ENCODE measurements at regions of chr3 and their contacts with region 1.

Region 1: DNA sequence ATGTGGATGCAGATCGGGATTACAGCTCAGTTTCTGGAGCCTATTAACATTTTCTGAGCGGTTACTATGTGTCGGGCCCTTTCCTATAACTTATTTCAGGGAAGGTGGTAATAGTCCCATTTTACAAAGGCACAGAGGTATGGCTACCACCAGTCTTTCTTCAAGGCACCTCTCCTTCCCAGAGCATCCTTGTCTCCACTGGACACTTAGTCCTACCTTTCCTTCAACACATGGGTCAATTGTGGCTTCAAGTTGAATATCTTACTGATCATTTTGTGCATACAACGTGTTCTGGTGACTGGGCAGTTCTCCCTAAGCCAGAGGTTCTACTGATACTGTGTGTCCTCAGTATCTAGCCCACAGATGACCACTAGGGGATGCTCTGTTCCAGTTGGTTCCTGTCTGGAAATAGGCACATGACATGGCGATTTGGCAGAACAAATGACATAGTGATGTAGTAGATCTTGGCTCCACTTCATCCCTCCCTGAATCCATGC is 60.7 kb upstream of the CMTM8 start:
- DNase-seq: peak; percentile 91
- H3K4me3 ChIP-seq: no peak overlapping the region
- H3K27ac ChIP-seq: no peak overlapping the region
- H3K4me1 ChIP-seq: peaks cover 6% of the 10 kb centered on the region
- H3K27me3 ChIP-seq: no peaks in the 10 kb centered on the region
- CTCF ChIP-seq: peak; percentile 92 to 95
- POLR2A ChIP-seq: no peak

Region 2: DNA sequence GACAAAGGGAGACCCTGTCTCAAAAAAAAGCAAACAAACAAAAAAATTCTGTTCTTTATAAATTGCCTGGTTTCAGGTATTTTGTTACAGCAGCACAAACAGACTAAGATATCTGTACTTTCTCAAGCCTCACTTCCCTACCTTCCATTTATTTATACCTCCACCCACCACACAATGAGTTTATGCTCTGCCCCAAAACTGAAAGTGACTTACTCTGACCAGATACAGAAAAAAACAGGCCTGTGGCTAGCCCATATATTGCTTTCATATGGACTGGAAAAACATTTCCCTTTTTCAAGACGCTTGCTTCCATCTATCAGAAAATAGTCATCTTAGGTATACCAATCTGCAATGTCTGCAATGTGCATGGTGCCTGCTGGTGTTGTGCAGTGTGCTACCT is 80.0 kb before region 1 on chr3:
- CTCF ChIA-PET with region 1: no interaction called
- POLR2A ChIA-PET with region 1: no interaction called
- dilution Hi-C with region 1: no loop called
- intact Hi-C with region 1: no loop called
- DNase-seq: no peak
- H3K4me3 ChIP-seq: no peak overlapping the region
- H3K27ac ChIP-seq: no peak overlapping the region
- H3K4me1 ChIP-seq: no peaks in the 10 kb centered on the region
- H3K27me3 ChIP-seq: peaks cover 0 to 2% of the 10 kb centered on the region in 2 experiments
- CTCF ChIP-seq: no peak
- POLR2A ChIP-seq: no peak

Region 3: DNA sequence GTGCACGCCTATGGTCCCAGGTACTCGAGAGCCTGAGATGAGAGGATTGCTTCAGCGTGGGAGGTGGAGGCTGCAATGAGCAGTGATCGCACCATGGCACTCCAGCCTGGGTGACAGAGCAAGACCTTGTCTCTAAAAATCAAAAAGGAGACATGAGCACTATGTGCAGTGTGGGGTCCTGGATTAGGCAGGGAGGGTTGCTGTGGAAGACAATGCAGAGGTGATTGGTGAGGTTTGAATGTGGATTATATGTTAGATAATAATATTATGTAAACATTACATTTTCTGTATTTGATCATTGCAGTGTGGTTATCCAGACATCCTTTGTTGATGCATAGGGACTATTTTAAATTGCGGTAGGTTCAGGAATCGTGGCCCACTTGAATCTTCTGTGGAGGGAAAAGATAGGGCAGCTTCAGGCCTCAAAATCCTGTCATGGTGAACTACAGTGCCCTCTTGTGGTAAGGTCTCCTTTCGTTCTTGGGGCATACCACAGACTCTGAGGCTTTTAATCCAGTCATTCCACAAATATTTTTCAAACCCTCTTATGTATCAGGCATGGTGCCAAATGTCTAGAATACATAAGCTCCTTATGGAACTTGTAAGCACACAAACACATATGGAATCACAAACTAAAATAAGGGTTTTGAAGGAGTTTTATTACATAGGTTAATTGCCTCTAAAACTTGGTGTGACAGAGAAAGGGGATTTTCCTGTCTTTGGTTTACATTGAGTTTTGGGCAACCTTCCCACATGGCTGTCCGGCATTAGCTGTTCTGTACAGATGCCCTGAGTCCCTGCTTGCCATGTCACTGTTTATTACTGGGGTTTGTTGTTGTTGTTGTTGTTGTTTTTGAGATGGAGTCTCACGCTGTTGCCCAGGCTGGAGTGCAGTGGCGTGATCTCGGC is 33.6 kb before region 1 on chr3:
- CTCF ChIA-PET with region 1: no interaction called
- POLR2A ChIA-PET with region 1: no interaction called
- dilution Hi-C with region 1: no loop called
- intact Hi-C with region 1: no loop called
- DNase-seq: peak; percentile 90
- H3K4me3 ChIP-seq: no peak overlapping the region
- H3K27ac ChIP-seq: no peak overlapping the region
- H3K4me1 ChIP-seq: peaks cover 23% of the 10 kb centered on the region
- H3K27me3 ChIP-seq: no peaks in the 10 kb centered on the region
- CTCF ChIP-seq: peak; percentile 71 to 76
- POLR2A ChIP-seq: no peak

Region 4: GRCh38 chr3:32238453-32239306 is 60.9 kb after region 1 on chr3 and contains the start of gene CMTM8:
- CTCF ChIA-PET with region 1: interaction called, 27 read pairs
- POLR2A ChIA-PET with region 1: no interaction called
- dilution Hi-C with region 1: no loop called
- intact Hi-C with region 1: loop called (anchors 1 kb)
- DNase-seq: peak; percentile 51
- H3K4me3 ChIP-seq: peak within 1 kb of the TSS; percentile 67 to 78 (median 70)
- H3K27ac ChIP-seq: no peak within 1 kb of the TSS
- H3K4me1 ChIP-seq: peaks cover 15% of the 10 kb centered on the region
- H3K27me3 ChIP-seq: no peaks in the 10 kb centered on the region
- CTCF ChIP-seq: no peak
- POLR2A ChIP-seq: no peak
- total RNA-seq, gene CMTM8: 7.3 and 8.1 TPM in 2 replicates

Region 5: GRCh38 chr3:32296256-32297204 is 118.8 kb after region 1 on chr3:
- CTCF ChIA-PET with region 1: interaction called, 15 read pairs
- POLR2A ChIA-PET with region 1: no interaction called
- dilution Hi-C with region 1: no loop called
- intact Hi-C with region 1: loop called (anchors 1 kb)
- DNase-seq: peak; percentile 68
- H3K4me3 ChIP-seq: no peak overlapping the region
- H3K27ac ChIP-seq: no peak overlapping the region
- H3K4me1 ChIP-seq: peaks cover 3% of the 10 kb centered on the region
- H3K27me3 ChIP-seq: no peaks in the 10 kb centered on the region
- CTCF ChIP-seq: peak; percentile 80 to 86
- POLR2A ChIP-seq: no peak

Region 6: DNA sequence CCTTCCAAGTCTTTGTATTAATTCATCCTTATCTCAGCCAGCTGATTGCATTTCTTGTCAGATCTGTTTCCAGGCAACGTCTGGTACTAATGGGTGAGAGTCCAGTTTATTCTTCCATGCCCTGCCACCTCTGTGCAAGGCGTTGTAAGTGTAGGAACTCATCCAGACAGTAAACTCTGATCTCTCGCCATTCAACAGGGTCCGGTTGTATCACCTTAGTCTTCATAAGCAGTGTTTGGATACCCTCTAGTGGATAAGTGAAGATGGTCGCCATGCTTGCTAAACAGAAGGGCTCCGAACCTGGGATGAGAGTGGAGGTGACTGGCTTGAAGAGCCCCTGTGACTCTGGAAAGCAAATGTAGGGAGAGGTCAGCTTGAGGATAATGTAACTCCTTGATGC is 162.3 kb after region 1 on chr3:
- CTCF ChIA-PET with region 1: interaction called, 9 read pairs
- POLR2A ChIA-PET with region 1: no interaction called
- dilution Hi-C with region 1: no loop called
- intact Hi-C with region 1: loop called (anchors 1 kb)
- DNase-seq: peak; percentile 36
- H3K4me3 ChIP-seq: no peak overlapping the region
- H3K27ac ChIP-seq: no peak overlapping the region
- H3K4me1 ChIP-seq: peaks cover 6% of the 10 kb centered on the region
- H3K27me3 ChIP-seq: no peaks in the 10 kb centered on the region
- CTCF ChIP-seq: peak; percentile 33 to 34
- POLR2A ChIP-seq: no peak

Region 7: GRCh38 chr3:32502118-32502945 is 324.6 kb after region 1 on chr3 and contains the start of gene CMTM6:
- CTCF ChIA-PET with region 1: no interaction called
- POLR2A ChIA-PET with region 1: interaction called, 3 read pairs
- dilution Hi-C with region 1: no loop called
- intact Hi-C with region 1: loop called (anchors 1 kb)
- DNase-seq: peak; percentile 78
- H3K4me3 ChIP-seq: peak within 1 kb of the TSS; percentile 72 to 89 (median 81)
- H3K27ac ChIP-seq: peak within 1 kb of the TSS; percentile 87
- H3K4me1 ChIP-seq: peaks cover 19% of the 10 kb centered on the region
- H3K27me3 ChIP-seq: no peaks in the 10 kb centered on the region
- CTCF ChIP-seq: no peak
- POLR2A ChIP-seq: peak; percentile 78
- total RNA-seq, gene CMTM6: 54.0 and 56.3 TPM in 2 replicates

Region 8: GRCh38 chr3:32570421-32571191 is 392.9 kb after region 1 on chr3 and contains the start of gene DYNC1LI1:
- CTCF ChIA-PET with region 1: no interaction called
- POLR2A ChIA-PET with region 1: no interaction called
- dilution Hi-C with region 1: no loop called
- intact Hi-C with region 1: loop called (anchors 1 kb)
- DNase-seq: peak; percentile 95
- H3K4me3 ChIP-seq: peak within 1 kb of the TSS; percentile 81 to 99 (median 91)
- H3K27ac ChIP-seq: peak within 1 kb of the TSS; percentile 93
- H3K4me1 ChIP-seq: peaks cover 19% of the 10 kb centered on the region
- H3K27me3 ChIP-seq: no peaks in the 10 kb centered on the region
- CTCF ChIP-seq: no peak
- POLR2A ChIP-seq: peak; percentile 95
- total RNA-seq, gene DYNC1LI1: 45.6 and 47.6 TPM in 2 replicates

Region 9: GRCh38 chr3:32667122-32667521 is 489.4 kb after region 1 on chr3:
- CTCF ChIA-PET with region 1: no interaction called
- POLR2A ChIA-PET with region 1: no interaction called
- dilution Hi-C with region 1: no loop called
- intact Hi-C with region 1: loop called (anchors 1 kb)
- DNase-seq: no peak
- H3K4me3 ChIP-seq: no peak overlapping the region
- H3K27ac ChIP-seq: no peak overlapping the region
- H3K4me1 ChIP-seq: no peaks in the 10 kb centered on the region
- H3K27me3 ChIP-seq: peaks cover 7 to 10% of the 10 kb centered on the region in 2 experiments
- CTCF ChIP-seq: no peak
- POLR2A ChIP-seq: no peak